Right ventricle myocardium inferior (tissue), 1 donor: ENCODE measurements at regions of chr5 and their contacts with region 1.

Region 1: GRCh38 chr5:126002222-126002897 is 420.8 kb upstream of the GRAMD2B start:
- DNase-seq: peak; percentile 77
- ATAC-seq: peak; percentile 96

Region 2: GRCh38 chr5:126044111-126044668 is 41.8 kb after region 1 on chr5:
- intact Hi-C with region 1: loop called (anchors 5 kb)
- DNase-seq: no peak
- ATAC-seq: peak; percentile 97